HEK293T (cell line): ENCODE measurements at regions of chr5 and their contacts with region 1.

Region 1: DNA sequence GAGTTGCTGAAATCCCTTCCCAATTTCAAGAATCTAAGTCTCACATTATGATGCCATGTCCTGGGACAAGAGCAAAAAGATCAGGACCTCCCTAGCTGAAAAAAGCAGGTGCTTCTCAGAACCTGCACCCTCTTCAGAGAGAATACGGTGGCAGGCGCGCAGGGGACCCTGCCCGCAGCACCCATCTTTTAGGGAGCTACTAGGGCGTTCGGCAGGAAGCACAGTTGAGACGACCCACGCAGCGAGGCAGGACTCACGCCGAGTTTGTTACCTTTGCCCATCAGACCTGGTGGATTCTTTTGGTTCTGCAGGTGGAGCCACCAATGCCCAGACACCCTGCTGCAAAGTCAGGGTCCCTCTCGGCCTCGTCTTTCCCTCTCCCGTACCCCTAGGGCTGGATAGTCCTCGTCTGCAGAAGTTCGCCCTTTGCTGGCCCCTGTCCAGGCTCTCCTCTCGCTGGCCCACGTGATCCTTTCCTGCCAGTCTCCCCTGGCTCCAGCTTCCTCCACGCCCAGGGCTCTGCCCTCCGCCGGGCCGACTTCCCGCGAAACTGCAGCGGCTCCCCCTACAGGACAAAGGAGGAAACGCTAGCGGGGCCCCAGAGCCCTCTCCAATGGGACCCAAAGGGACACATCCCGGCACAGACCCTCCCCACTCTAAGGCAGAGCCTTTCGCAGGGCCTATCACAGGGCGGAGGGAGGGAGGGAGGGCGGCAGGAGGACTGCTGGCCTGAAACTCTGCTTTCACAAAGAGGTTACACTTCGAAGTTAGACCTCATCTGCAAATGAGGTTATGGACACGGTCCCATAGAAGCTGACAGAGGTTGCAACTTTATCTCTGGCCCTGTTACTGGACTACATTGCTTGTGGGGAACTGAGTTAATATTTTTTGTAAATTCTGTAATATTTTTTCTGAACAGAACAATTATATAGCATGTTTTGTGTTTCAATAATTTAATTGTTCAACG is 28.8 kb downstream of the TMEM174 start:
- DNase-seq: peak; percentile 92

Region 2: GRCh38 chr5:73027361-73027760 is 174.5 kb before region 1 on chr5:
- CTCF ChIA-PET with region 1: no interaction called
- POLR2A ChIA-PET with region 1: no interaction called
- DNase-seq: no peak

Region 3: GRCh38 chr5:73189871-73190376 is 11.9 kb before region 1 on chr5:
- CTCF ChIA-PET with region 1: interaction called, 10 read pairs
- POLR2A ChIA-PET with region 1: no interaction called
- DNase-seq: no peak

Region 4: DNA sequence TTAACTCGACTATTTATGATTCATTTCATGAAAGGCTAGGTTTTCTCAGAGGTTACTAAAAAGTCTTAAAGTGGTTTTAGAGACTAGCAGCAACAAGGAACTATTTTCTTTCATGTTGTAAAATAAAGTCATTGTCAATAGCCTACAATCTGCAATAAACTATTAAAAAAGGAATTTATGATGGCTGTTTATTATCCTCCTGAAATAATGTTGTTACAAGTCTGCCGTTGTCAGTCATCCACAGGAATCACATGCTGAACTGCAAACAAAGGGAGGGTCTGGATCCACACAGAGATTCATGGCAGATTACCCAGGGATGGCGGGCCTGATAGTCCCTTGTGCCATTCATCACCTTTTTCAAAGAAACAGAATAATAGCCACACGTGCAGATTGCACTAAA is 20.3 kb after region 1 on chr5:
- CTCF ChIA-PET with region 1: no interaction called
- POLR2A ChIA-PET with region 1: no interaction called
- DNase-seq: no peak